Psoas muscle (tissue), 8 donors: ENCODE measurements at regions of chr2 and their contacts with region 1.

Region 1: GRCh38 chr2:24490674-24491625 is at the start of gene NCOA1:
- DNase-seq: peak; percentile 92 to 95
- ATAC-seq: peak; percentile 80 to 87 (median 84)
- H3K4me3 ChIP-seq: peak within 1 kb of the TSS; percentile 86
- H3K27ac ChIP-seq: peak within 1 kb of the TSS; percentile 94
- H3K4me1 ChIP-seq: peaks cover 34% of the 10 kb centered on the region
- H3K27me3 ChIP-seq: no peaks in the 10 kb centered on the region
- CTCF ChIP-seq: peak; percentile 26
- total RNA-seq, gene NCOA1: 44.2 to 78.1 (median 53.9) TPM

Region 2: DNA sequence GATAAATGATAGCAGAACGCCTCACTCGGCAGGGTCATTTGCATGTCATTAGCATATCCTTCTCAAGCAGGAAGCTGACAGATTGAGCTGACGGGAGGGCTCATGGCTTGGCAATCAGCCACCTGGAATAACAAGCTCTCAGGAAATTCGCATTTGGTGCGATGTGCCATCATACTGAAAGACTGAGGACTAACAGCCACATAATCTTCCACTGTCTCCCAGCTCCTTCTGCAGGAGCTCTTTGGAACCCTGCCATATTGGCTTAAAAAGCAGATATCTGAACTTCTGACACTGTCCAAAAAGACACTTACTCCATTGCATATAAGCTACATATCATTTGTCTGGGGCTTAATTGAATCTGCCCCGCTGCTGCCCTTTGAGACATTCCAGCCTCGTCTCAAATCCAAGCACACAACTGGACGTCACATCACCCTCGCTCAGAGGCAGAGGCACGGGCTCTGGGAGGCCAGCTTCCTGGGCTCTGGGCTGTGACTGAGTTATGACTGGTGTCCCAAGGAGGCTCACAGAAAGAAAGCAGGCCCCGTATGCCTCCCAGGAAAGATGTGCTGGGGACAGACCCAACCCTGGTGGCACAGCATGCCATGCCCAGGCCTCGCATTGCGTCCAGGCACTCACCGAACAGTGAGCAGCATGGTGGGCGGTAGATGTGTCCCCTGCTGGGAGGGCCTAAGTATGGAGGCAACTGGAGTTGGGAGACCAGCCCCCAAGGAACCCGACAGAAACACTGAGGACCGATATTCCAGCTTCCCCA is 792.0 kb before region 1 on chr2:
- intact Hi-C with region 1: no loop called
- DNase-seq: peak in 1 of 2 donors; percentile 45
- ATAC-seq: peak in 3 of 4 donors; percentile 34 to 67 (median 55)
- H3K4me3 ChIP-seq: no peak overlapping the region
- H3K27ac ChIP-seq: peak overlapping the region; percentile 21
- H3K4me1 ChIP-seq: peaks cover 9% of the 10 kb centered on the region
- H3K27me3 ChIP-seq: no peaks in the 10 kb centered on the region
- CTCF ChIP-seq: no peak

Region 3: GRCh38 chr2:24429197-24430074 is 61.5 kb before region 1 on chr2:
- intact Hi-C with region 1: loop called (anchors 5 kb)
- DNase-seq: no peak
- ATAC-seq: peak in 1 of 4 donors; percentile 25
- H3K4me3 ChIP-seq: no peak overlapping the region
- H3K27ac ChIP-seq: no peak overlapping the region
- H3K4me1 ChIP-seq: peaks cover 28% of the 10 kb centered on the region
- H3K27me3 ChIP-seq: no peaks in the 10 kb centered on the region
- CTCF ChIP-seq: no peak

Region 4: DNA sequence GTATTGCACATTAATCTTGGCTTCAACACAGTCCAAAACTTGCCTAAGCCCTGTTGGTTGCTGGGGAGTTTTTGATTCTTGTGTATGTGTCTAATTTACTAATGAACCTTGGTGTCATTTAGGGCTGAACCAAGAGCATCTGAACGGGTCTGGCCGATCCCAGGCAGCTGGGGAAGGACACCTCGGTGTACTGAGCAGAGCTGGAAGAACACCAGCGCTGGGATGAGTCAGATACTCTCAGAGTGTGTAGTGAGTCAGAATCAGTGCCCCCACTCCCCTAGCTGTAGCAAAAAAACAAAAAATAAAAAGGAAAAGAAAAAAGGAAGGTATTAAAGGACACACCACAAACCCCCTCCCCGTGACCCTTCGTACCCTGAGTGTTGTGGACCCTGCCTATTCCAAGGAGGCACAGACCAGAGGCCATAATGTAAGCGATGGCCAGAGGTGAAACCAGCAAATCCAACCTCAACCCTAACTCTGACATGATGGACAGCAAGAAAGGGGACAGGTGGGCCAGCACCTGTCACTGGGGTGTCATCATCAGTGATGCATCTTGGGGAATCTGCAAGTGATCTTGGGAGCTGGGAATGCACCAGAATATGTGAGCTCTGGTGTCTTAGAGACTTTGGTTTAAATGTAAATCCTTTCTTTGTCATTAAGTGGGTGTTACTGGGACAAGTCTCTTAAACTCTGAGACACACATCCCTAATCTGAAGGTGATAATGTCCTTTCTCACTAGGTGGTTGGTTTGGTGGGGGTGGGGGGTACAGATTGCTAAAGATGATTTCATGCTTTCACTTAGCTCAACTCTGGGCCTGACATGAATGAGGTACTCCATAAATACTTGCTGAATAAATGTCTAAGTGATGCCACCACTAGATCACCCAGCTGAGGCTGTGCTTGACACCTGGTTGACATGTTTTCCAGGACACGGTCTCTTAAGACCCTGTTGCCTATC is 34.1 kb before region 1 on chr2:
- intact Hi-C with region 1: loop called in 1 of 2 experiments (anchors 2 kb)
- DNase-seq: peak; percentile 86 to 92
- ATAC-seq: peak; percentile 96 to 98 (median 98)
- H3K4me3 ChIP-seq: no peak overlapping the region
- H3K27ac ChIP-seq: peak overlapping the region; percentile 84
- H3K4me1 ChIP-seq: peaks cover 34% of the 10 kb centered on the region
- H3K27me3 ChIP-seq: no peaks in the 10 kb centered on the region
- CTCF ChIP-seq: no peak

Region 5: GRCh38 chr2:24721470-24721869 is 230.5 kb after region 1 on chr2:
- intact Hi-C with region 1: loop called in 1 of 2 experiments (anchors 5 kb)
- DNase-seq: peak; percentile 63 to 89
- ATAC-seq: peak; percentile 94 to 97 (median 95)
- H3K4me3 ChIP-seq: peak overlapping the region; percentile 13
- H3K27ac ChIP-seq: peak overlapping the region; percentile 81
- H3K4me1 ChIP-seq: peaks cover 40% of the 10 kb centered on the region
- H3K27me3 ChIP-seq: no peaks in the 10 kb centered on the region
- CTCF ChIP-seq: no peak